Cardiac septum (tissue), 1 donor: ENCODE measurements at regions of chr19 and their contacts with region 1.

Region 1: GRCh38 chr19:10644260-10645007 is 9.7 kb upstream of the ILF3 start:
- DNase-seq: peak; percentile 91

Region 2: DNA sequence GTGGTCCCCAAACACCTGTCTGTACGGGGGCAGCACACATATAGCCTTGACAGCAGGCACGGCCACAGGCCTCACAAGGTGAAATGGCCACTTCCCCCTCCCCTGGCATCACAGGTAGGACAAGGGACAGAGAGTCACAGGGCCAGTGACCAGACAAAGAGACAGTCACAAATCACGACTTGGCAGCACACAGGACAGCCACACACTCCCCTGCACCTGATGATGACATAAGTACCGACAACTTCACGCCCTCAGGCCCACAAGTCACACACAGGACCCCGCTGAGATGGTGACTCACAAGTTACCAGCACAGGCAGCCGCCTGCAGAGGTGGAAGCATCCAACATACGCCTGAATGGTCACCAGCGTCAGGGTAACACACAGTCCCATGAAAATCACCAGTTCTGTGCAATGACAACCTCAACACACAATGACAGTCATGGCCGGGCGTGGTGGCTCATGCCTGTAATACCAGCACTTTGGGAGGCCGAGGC is 280.6 kb before region 1 on chr19:
- intact Hi-C with region 1: no loop called
- DNase-seq: no peak

Region 3: DNA sequence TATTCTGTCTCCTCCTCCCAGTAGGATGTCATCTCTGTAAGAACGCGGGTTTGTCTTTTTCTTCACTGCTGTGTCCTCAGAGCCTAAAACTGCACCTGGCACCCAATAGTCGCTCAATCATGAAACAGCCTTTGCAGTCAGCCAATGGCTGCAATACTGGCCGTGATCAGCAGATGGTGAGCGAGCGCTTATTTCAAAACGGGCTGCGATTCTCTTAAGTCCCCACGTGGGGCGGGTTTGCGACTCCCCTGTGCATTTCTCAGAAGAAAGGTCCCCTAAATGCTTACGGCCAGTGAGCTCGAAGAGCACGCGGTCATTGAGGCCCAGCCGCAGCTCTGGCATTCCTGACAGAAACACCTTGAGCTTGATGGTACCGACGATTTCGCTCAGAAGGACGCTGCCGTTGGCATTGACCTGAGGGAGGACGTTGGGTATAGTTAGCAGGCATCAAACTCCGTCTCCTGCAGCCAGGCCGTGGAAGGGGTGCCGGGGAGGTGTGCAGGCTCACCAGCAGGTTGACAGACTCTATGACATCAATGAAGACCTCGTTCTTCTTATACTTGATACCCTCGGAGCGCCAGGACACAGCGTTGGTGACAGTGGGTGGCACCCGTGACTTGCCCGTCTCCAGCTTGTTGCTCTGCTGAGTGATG is 63.3 kb before region 1 on chr19:
- intact Hi-C with region 1: loop called (anchors 1 kb)
- DNase-seq: peak; percentile 92

Region 4: DNA sequence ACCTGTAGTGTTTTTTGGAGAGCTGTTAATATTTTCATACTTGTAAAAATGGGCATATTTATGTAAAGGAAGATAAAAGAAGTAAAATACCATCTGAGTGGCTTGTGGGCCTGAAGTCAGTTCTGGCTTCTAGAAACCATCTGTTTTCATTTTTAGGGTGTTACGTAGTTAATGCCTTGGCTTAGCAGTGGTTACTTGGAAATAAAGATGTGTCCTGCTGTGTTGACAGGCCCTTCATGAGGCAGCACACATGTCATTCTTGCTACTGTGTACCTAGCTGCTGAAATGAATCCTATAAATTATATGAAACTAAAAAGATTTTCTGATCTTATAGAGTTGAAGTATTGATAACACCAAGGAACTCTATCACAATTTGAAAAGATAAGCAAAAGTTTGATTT is 25.7 kb after region 1 on chr19:
- intact Hi-C with region 1: no loop called
- DNase-seq: no peak